Prostate gland (tissue), 2 donors: ENCODE measurements at regions of chr1 and their contacts with region 1.

Region 1: GRCh38 chr1:234722904-234723720 is 113.1 kb upstream of the IRF2BP2 start:
- DNase-seq: peak; percentile 63
- H3K4me3 ChIP-seq: no peak overlapping the region
- H3K27ac ChIP-seq: peak overlapping the region; percentile 95 to 97
- H3K4me1 ChIP-seq: peaks cover 47% of the 10 kb centered on the region
- H3K27me3 ChIP-seq: no peaks in the 10 kb centered on the region
- CTCF ChIP-seq: no peak
- POLR2A ChIP-seq: no peak

Region 2: GRCh38 chr1:234499119-234499942 is 223.8 kb before region 1 on chr1:
- intact Hi-C with region 1: loop called (anchors 2 kb)
- DNase-seq: peak; percentile 91
- H3K4me3 ChIP-seq: no peak overlapping the region
- H3K27ac ChIP-seq: peak overlapping the region; percentile 75 to 84
- H3K4me1 ChIP-seq: peaks cover 4% of the 10 kb centered on the region
- H3K27me3 ChIP-seq: no peaks in the 10 kb centered on the region
- CTCF ChIP-seq: peak; percentile 89 to 99 (median 96)
- POLR2A ChIP-seq: no peak

Region 3: GRCh38 chr1:234610348-234611152 is 112.6 kb before region 1 on chr1:
- intact Hi-C with region 1: loop called (anchors 2 kb)
- DNase-seq: peak; percentile 93
- H3K4me3 ChIP-seq: peak overlapping the region; percentile 43 to 48
- H3K27ac ChIP-seq: peak overlapping the region; percentile 98 to 99
- H3K4me1 ChIP-seq: peaks cover 9% of the 10 kb centered on the region
- H3K27me3 ChIP-seq: no peaks in the 10 kb centered on the region
- CTCF ChIP-seq: peak in 2 of 4 experiments; percentile 28 to 42
- POLR2A ChIP-seq: peak; percentile 92

Region 4: GRCh38 chr1:234887016-234887900 is 164.1 kb after region 1 on chr1:
- intact Hi-C with region 1: loop called (anchors 5 kb)
- DNase-seq: no peak
- H3K4me3 ChIP-seq: no peak overlapping the region
- H3K27ac ChIP-seq: peak overlapping the region; percentile 72
- H3K4me1 ChIP-seq: no peaks in the 10 kb centered on the region
- H3K27me3 ChIP-seq: no peaks in the 10 kb centered on the region
- CTCF ChIP-seq: no peak
- POLR2A ChIP-seq: no peak

Region 5: GRCh38 chr1:234944439-234945344 is 221.6 kb after region 1 on chr1:
- intact Hi-C with region 1: no loop called
- DNase-seq: no peak
- H3K4me3 ChIP-seq: no peak overlapping the region
- H3K27ac ChIP-seq: no peak overlapping the region
- H3K4me1 ChIP-seq: no peaks in the 10 kb centered on the region
- H3K27me3 ChIP-seq: no peaks in the 10 kb centered on the region
- CTCF ChIP-seq: no peak
- POLR2A ChIP-seq: no peak

Region 6: GRCh38 chr1:234970731-234971476 is 247.8 kb after region 1 on chr1:
- intact Hi-C with region 1: loop called (anchors 5 kb)
- DNase-seq: peak; percentile 68
- H3K4me3 ChIP-seq: no peak overlapping the region
- H3K27ac ChIP-seq: peak overlapping the region; percentile 72
- H3K4me1 ChIP-seq: peaks cover 9% of the 10 kb centered on the region
- H3K27me3 ChIP-seq: no peaks in the 10 kb centered on the region
- CTCF ChIP-seq: no peak
- POLR2A ChIP-seq: no peak

Region 7: DNA sequence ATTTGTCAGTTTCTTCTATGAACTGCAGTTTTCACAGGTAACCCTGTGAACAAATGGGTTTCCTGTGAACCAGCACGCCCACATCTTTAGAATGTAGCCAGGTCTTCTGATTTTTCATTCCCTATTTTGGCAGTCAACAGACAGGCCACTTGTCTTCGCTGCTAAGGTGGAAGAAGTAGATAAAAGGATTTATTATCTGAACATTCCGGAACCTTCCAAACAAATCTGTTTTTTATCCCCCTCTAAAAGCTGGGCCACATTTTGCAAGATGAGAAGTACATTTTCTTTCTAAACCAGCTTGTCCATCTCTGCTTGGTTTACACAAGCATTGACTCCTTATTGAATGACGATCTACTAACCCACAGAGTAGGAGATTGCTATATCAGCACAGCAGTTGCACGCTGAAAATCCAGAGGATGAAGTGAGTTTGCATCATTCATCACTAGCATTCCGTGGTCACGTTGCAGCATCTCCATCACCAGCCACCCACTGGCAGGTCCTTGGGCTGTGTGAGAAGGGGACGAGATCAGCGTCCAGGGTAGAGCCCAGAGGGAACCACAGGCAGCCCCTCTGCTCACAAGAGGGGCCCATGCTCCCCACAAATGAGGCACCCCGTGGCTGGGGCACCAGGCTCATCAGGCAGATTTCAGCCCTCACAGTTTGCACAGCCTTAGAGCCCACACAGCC is 322.1 kb after region 1 on chr1:
- intact Hi-C with region 1: loop called (anchors 5 kb)
- DNase-seq: no peak
- H3K4me3 ChIP-seq: no peak overlapping the region
- H3K27ac ChIP-seq: no peak overlapping the region
- H3K4me1 ChIP-seq: no peaks in the 10 kb centered on the region
- H3K27me3 ChIP-seq: no peaks in the 10 kb centered on the region
- CTCF ChIP-seq: no peak
- POLR2A ChIP-seq: no peak

Region 8: DNA sequence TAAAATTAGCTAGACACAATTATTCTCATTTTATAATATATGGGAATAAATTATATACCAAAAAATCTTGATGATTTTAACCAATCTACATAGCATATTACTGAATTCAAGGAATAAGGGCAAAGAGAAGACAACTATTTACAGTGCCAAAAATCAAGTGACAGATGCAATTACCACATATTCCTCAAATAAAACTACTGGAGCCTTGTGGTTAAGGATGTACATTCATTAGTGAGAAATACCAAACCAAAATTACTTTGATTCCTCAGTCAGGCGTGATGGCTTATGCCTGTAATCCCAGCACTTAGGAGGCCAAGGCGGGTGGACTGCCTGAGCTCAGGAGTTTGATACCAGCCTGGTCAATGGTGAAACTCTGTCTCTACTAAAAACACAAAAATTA is 506.8 kb after region 1 on chr1:
- intact Hi-C with region 1: no loop called
- DNase-seq: no peak
- H3K4me3 ChIP-seq: no peak overlapping the region
- H3K27ac ChIP-seq: no peak overlapping the region
- H3K4me1 ChIP-seq: no peaks in the 10 kb centered on the region
- H3K27me3 ChIP-seq: no peaks in the 10 kb centered on the region
- CTCF ChIP-seq: no peak
- POLR2A ChIP-seq: no peak